ENCODE measurements at regions of chr11 and their contacts with region 1.

Region 1: GRCh38 chr11:128157423-128158298 is 429.7 kb downstream of the ETS1 start:
- H3K4me3 ChIP-seq: peak overlapping the region; percentile 21
- H3K27ac ChIP-seq: no peak overlapping the region
- H3K4me1 ChIP-seq: no peaks in the 10 kb centered on the region
- CTCF ChIP-seq: peak; percentile 25; the same call in 1 of the 2 replicates

Region 2: DNA sequence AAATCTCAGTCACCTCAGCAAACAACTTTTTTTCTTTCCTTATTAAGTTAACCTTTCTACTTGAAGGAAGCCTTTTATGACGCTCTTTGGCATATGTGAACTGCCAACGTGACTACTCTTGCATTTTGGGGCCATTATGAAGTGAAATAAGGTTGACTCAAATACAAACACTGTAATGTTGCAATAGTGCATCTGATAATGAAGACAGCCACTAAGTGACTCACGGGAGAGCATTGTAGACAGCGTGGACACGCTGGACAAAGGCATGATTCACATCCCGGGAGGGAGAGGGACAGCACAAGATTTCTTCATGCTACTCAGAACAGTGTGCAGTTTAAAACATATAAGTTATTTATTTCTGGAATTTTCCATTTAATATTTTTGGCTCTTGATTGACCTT is 131.1 kb before region 1 on chr11:
- CTCF ChIA-PET with region 1: interaction called, 31 read pairs
- POLR2A ChIA-PET with region 1: no interaction called
- H3K4me3 ChIP-seq: no peak overlapping the region
- H3K27ac ChIP-seq: no peak overlapping the region
- H3K4me1 ChIP-seq: no peaks in the 10 kb centered on the region
- CTCF ChIP-seq: no peak

Region 3: GRCh38 chr11:128061281-128061871 is 96.3 kb before region 1 on chr11:
- CTCF ChIA-PET with region 1: interaction called, 20 read pairs
- POLR2A ChIA-PET with region 1: no interaction called
- H3K4me3 ChIP-seq: no peak overlapping the region
- H3K27ac ChIP-seq: peak overlapping the region; percentile 70
- H3K4me1 ChIP-seq: peaks cover 3% of the 10 kb centered on the region
- CTCF ChIP-seq: no peak

Region 4: DNA sequence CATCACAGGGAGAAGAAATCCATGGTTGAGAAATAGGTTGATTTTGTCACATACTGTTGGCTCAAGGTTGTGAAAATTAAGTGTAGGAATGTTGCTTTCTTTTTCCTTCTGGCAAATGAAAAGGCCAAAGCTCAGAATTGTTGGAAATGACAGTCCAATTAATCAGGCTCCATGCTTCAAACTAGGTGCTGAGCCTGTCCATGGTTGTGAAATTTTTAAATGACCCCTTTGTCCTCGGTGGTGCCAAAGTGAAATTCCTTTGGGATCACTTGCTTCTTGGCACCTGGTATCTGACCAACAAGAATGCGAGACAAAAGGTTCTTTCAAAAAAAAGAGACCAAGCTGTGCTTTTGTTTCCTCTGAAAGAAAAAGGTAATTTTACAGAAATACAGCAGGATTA is 22.2 kb before region 1 on chr11:
- CTCF ChIA-PET with region 1: interaction called, 16 read pairs
- POLR2A ChIA-PET with region 1: no interaction called
- H3K4me3 ChIP-seq: no peak overlapping the region
- H3K27ac ChIP-seq: no peak overlapping the region
- H3K4me1 ChIP-seq: no peaks in the 10 kb centered on the region
- CTCF ChIP-seq: no peak

Region 5: DNA sequence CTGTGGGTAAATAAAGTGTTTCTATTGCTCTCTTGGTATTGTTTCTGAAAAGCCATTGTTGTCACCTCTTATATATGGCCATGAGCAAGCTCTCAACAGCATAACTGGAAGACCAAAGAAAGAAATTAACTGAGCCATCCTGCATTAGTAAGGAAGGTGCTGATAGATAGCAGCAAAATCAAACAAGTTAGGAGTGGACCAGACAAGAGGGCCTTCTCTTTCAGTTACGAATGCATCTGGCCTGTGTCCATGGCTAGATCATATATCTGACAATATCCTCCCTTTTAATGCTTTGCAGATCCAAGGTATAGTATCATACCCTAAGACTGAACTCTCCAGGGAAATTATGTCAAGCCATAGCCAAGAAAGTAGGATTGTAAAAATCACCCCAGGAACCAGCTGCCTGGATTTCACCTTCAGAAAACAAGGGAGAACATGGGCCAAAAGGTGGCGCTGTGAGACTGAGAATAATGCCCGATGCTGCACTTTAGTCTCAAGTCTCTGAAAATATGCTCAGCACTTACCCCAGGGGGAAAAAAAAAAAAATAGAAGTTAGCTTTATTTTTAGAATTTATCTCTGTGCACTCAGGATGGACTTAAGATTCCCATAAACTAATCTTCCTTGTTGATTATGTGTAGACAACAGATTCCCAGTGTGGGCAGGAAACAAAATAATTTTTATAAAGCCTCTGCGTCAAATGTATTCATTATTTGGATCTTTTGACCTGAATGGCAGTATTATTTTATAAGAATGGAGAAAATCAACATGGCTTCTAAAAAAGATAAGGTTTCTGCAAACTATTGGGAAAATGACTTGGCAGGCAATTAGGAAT is 14.6 kb after region 1 on chr11:
- CTCF ChIA-PET with region 1: interaction called, 127 read pairs
- POLR2A ChIA-PET with region 1: no interaction called
- H3K4me3 ChIP-seq: no peak overlapping the region
- H3K27ac ChIP-seq: no peak overlapping the region
- H3K4me1 ChIP-seq: peaks cover 3% of the 10 kb centered on the region; the same call in 1 of the 2 replicates
- CTCF ChIP-seq: 0 out of 2 replicates have a peak, but pooled peaks have one; percentile 17

Region 6: GRCh38 chr11:128630367-128631230 is 472.9 kb after region 1 on chr11:
- CTCF ChIA-PET with region 1: interaction called, 61 read pairs
- POLR2A ChIA-PET with region 1: no interaction called
- H3K4me3 ChIP-seq: no peak overlapping the region
- H3K27ac ChIP-seq: no peak overlapping the region
- H3K4me1 ChIP-seq: no peaks in the 10 kb centered on the region
- CTCF ChIP-seq: 0 out of 2 replicates have a peak, but pooled peaks have one; percentile 26